ENCODE measurements at regions of chr10 and their contacts with region 1.

Region 1: GRCh38 chr10:71835671-71836595 is 15.1 kb downstream of the PSAP start:
- DNase-seq: no peak
- ATAC-seq: no peak
- H3K4me3 Mint-ChIP-seq: no peak overlapping the region
- H3K27ac Mint-ChIP-seq: no peak overlapping the region
- H3K4me1 Mint-ChIP-seq: peaks cover 42% of the 10 kb centered on the region
- H3K27me3 Mint-ChIP-seq: no peaks in the 10 kb centered on the region

Region 2: GRCh38 chr10:71752391-71753090 is 83.4 kb before region 1 on chr10:
- CTCF ChIA-PET with region 1: no interaction called
- POLR2A ChIA-PET with region 1: no interaction called
- DNase-seq: no peak
- ATAC-seq: no peak
- H3K4me3 Mint-ChIP-seq: peak overlapping the region; percentile 34
- H3K27ac Mint-ChIP-seq: peak overlapping the region; percentile 94
- H3K4me1 Mint-ChIP-seq: peaks cover 97% of the 10 kb centered on the region
- H3K27me3 Mint-ChIP-seq: no peaks in the 10 kb centered on the region

Region 3: GRCh38 chr10:71850637-71851464 is 14.9 kb after region 1 on chr10 and contains the start of gene PSAP:
- CTCF ChIA-PET with region 1: interaction called, 12 read pairs
- POLR2A ChIA-PET with region 1: interaction called, 4 read pairs
- DNase-seq: peak; percentile 99
- ATAC-seq: peak; percentile 98
- H3K4me3 Mint-ChIP-seq: peak within 1 kb of the TSS; percentile 91
- H3K27ac Mint-ChIP-seq: peak within 1 kb of the TSS; percentile 73
- H3K4me1 Mint-ChIP-seq: peaks cover 45% of the 10 kb centered on the region
- H3K27me3 Mint-ChIP-seq: peaks cover 2% of the 10 kb centered on the region
- total RNA-seq, gene PSAP: 112 to 113 TPM

Region 4: GRCh38 chr10:71889388-71889987 is 53.6 kb after region 1 on chr10:
- CTCF ChIA-PET with region 1: interaction called, 52 read pairs
- POLR2A ChIA-PET with region 1: no interaction called
- DNase-seq: no peak
- ATAC-seq: no peak
- H3K4me3 Mint-ChIP-seq: peak overlapping the region; percentile 82
- H3K27ac Mint-ChIP-seq: peak overlapping the region; percentile 83
- H3K4me1 Mint-ChIP-seq: peaks cover 15% of the 10 kb centered on the region
- H3K27me3 Mint-ChIP-seq: peaks cover 24% of the 10 kb centered on the region

Region 5: GRCh38 chr10:72107325-72108003 is 271.5 kb after region 1 on chr10:
- CTCF ChIA-PET with region 1: no interaction called
- POLR2A ChIA-PET with region 1: no interaction called
- DNase-seq: peak; percentile 65
- ATAC-seq: peak; percentile 72
- H3K4me3 Mint-ChIP-seq: peak overlapping the region; percentile 77
- H3K27ac Mint-ChIP-seq: peak overlapping the region; percentile 92
- H3K4me1 Mint-ChIP-seq: peaks cover 61% of the 10 kb centered on the region
- H3K27me3 Mint-ChIP-seq: no peaks in the 10 kb centered on the region

Measured in activated CD8-positive, alpha-beta T cell treated with anti-CD3 and anti-CD28 coated beads, Interleukin-2, amount 10 ng/mL, durations not matched to agents 7 days and 5 days (primary cell).